ENCODE measurements at regions of chr4 and their contacts with region 1.

Region 1: DNA sequence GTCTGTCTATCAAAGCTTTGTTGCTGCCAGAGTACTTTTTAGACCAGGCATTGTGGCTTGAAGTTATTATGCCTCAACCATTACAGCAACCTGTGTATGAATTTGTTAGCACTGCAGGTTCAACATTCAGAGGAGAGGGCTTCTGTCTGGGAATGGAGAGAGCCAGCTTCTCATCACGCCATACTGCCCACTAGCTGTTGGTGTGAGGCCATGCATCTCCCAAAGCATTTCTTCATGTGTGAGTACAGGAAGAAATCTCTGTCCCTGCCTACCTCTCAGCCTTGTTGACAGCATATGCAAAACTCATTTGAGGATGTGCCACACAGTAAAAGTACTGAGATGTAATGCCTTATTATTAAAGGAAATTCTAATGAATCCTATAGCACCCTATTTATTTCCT is 76.9 kb upstream of the PPARGC1A start:
- DNase-seq: no peak
- ATAC-seq: no peak
- H3K4me3 ChIP-seq: no peak overlapping the region
- H3K27ac ChIP-seq: no peak overlapping the region
- H3K4me1 ChIP-seq: no peaks in the 10 kb centered on the region
- H3K27me3 ChIP-seq: no peaks in the 10 kb centered on the region
- CTCF ChIP-seq: peak in 4 of 12 donors; percentile 24 to 35 (median 34)
- POLR2A ChIP-seq: no peak

Region 2: DNA sequence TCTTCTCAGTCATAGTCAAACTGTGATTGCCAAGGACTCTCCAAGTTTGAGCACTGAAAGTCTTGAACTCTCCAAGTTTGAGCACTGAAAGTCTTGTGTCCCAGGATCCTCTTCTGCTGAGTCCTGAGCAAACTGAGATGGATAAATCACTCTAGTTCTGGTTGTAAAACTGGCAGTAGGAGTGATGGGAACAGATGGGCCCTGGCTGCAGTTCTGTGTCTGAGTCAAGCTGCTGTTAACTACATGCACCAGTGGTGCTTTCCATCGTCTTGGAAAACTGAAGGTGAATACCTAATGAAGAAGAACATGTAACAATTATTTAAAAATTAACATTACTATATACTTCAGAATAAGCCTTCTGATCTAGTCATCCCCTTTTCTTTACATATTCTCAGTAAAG is 1990.6 kb before region 1 on chr4:
- intact Hi-C with region 1: no loop called
- DNase-seq: no peak
- ATAC-seq: no peak
- H3K4me3 ChIP-seq: no peak overlapping the region
- H3K27ac ChIP-seq: no peak overlapping the region
- H3K4me1 ChIP-seq: no peaks in the 10 kb centered on the region
- H3K27me3 ChIP-seq: no peaks in the 10 kb centered on the region
- CTCF ChIP-seq: no peak
- POLR2A ChIP-seq: no peak

Region 3: DNA sequence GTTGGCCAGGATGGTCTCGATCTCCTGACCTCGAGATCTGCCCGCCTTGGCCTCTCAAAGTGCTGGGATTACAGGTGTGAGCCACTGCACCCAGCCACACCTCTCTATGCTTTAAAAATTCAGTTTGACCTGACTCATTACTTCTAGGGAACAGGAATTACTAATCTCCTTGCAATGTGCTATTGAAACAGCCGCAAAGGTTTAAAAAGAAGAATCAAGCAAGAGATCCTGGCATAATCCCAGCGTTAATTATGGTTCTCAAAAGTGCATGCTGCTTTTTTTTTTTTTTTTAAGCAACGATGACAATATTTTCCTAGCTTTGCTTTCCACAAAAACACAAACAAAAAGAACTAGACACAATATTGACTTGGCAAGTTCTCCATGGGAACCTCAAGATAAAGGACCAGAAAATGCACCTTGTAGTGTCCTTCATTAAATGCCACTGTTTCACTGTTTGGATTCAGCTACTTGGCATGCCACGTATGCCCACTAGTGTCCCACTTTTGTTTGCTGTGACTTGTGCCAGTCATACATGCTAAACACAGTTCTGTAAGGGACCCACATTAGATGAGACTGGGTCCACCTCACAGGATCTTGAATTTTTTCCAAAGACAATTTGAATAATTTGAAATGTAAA is 35.7 kb after region 1 on chr4:
- intact Hi-C with region 1: no loop called
- DNase-seq: no peak
- ATAC-seq: no peak
- H3K4me3 ChIP-seq: no peak overlapping the region
- H3K27ac ChIP-seq: no peak overlapping the region
- H3K4me1 ChIP-seq: no peaks in the 10 kb centered on the region
- H3K27me3 ChIP-seq: peaks cover 0 to 6% (median 0%) of the 10 kb centered on the region in 9 donors
- CTCF ChIP-seq: no peak
- POLR2A ChIP-seq: no peak

Region 4: GRCh38 chr4:24024605-24025004 is 57.9 kb after region 1 on chr4:
- intact Hi-C with region 1: loop called in 1 of 10 experiments (anchors 10 kb)
- DNase-seq: no peak
- ATAC-seq: no peak
- H3K4me3 ChIP-seq: no peak overlapping the region
- H3K27ac ChIP-seq: no peak overlapping the region
- H3K4me1 ChIP-seq: no peaks in the 10 kb centered on the region
- H3K27me3 ChIP-seq: no peaks in the 10 kb centered on the region
- CTCF ChIP-seq: no peak
- POLR2A ChIP-seq: no peak

Measured in heart left ventricle (tissue), 16 donors.